ENCODE measurements at regions of chr4 and their contacts with region 1.

Region 1: DNA sequence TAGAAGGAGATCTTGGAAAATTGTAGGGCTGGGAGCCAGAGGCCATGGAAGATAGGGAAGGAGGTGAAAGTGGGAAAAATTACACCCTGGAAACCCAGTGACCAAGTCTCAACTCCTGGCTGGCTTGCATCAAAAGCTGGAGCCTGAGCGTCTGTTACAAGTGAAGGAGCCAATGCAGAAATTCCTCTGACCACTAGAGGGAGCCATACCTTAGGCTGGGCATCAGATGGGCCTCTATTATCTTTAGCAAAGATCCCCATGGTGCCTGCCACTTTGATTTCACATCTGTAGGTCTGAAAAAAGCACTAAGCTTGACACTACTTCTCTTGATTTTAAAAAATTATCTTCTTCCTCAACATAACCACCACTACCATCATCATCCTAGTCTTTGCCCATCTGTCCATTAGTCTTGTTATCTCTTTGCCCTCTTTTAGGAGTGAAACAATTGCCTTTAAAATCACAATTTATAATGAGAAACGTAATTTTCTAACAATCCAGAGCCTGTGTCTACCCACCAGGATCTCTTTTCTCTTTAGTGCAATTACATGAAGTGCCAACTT is 62.9 kb downstream of the ANAPC4 start:
- DNase-seq: peak; percentile 88
- H3K4me3 Mint-ChIP-seq: no peak overlapping the region
- H3K27ac Mint-ChIP-seq: no peak overlapping the region
- H3K4me1 Mint-ChIP-seq: no peaks in the 10 kb centered on the region
- H3K27me3 Mint-ChIP-seq: no peaks in the 10 kb centered on the region

Region 2: GRCh38 chr4:25767877-25768725 is 328.1 kb after region 1 on chr4:
- intact Hi-C with region 1: loop called (anchors 1 kb)
- DNase-seq: peak; percentile 73
- H3K4me3 Mint-ChIP-seq: no peak overlapping the region
- H3K27ac Mint-ChIP-seq: no peak overlapping the region
- H3K4me1 Mint-ChIP-seq: no peaks in the 10 kb centered on the region
- H3K27me3 Mint-ChIP-seq: no peaks in the 10 kb centered on the region

Region 3: DNA sequence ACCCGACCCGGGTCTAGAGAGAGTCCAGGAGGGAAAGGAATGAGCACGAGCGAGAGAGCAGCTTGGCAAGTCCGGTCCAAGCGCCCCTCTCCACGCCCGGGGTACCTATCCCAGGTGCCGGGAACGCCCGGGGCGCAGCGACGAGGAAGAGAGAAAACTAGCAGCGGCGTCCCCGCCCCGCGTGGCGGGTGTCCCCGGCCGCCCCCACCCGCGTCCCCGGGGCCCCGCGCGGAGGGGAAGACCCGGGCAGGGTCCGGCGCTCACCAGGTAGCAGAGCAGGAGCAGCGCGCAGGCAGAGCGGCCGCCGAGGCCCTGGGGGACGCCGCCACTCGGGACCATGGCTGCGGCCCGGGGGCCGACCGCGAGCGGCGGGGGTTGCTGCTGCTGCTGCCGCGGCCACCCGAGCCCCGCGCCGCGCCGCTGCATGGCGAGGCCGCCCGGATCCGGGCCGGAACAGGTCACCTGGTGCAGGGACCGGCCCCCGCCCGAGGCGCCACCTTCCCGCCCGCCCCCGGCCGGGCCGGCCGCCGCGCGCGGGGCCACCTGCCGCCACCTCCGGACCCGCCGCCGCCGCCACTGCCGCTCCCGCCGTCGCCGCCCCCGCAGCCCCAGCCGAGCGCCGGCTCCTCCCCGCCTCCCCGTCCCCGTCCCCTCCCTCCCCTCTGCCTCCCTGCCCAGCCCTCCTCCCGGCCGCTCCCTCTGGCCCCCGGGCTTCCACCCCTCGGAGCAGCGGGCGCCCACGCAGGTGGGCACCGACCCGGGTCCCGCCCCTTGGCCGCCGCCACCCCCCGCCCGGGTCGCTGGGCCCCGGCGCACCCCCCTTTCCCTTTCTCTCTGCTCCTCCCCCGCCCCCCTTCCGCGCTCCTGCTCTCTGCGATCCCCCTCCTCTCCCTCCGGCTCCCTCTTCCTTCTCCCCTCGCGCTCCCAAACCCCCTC is 422.7 kb after region 1 on chr4 and contains the start of gene SEL1L3:
- intact Hi-C with region 1: loop called (anchors 10 kb)
- DNase-seq: peak; percentile 86
- H3K4me3 Mint-ChIP-seq: peak within 1 kb of the TSS; percentile 99
- H3K27ac Mint-ChIP-seq: peak within 1 kb of the TSS; percentile 100
- H3K4me1 Mint-ChIP-seq: peaks cover 30% of the 10 kb centered on the region
- H3K27me3 Mint-ChIP-seq: peaks cover 2% of the 10 kb centered on the region
- total RNA-seq, gene SEL1L3: 33.9 and 35.3 TPM in 2 replicates